H1 (cell line): ENCODE measurements at regions of chr12 and their contacts with region 1.

Region 1: GRCh38 chr12:39103552-39104165 is 198.3 kb upstream of the CPNE8 start:
- DNase-seq: no peak
- H3K4me3 ChIP-seq: no peak overlapping the region
- H3K27ac ChIP-seq: no peak overlapping the region
- H3K4me1 ChIP-seq: no peaks in the 10 kb centered on the region; a peak in 1 of 7 replicates
- H3K27me3 ChIP-seq: no peaks in the 10 kb centered on the region
- CTCF ChIP-seq: peak in 2 of 3 experiments; percentile 74 to 79; a peak in 3 of 4 replicates
- EP300 ChIP-seq: no peak
- POLR2A ChIP-seq: no peak
- RAD21 ChIP-seq: peak; percentile 93 to 95

Region 2: GRCh38 chr12:38906482-38907170 is 197.0 kb before region 1 on chr12:
- CTCF ChIA-PET with region 1: interaction called, 17 read pairs
- POLR2A ChIA-PET with region 1: no interaction called
- DNase-seq: peak; percentile 65 to 93
- H3K4me3 ChIP-seq: peak overlapping the region; percentile 63 to 75 (median 72)
- H3K27ac ChIP-seq: no peak overlapping the region
- H3K4me1 ChIP-seq: peaks cover 0 to 2% (median 0%) of the 10 kb centered on the region in 4 experiments; a peak in 1 of 7 replicates
- H3K27me3 ChIP-seq: peaks cover 0 to 10% (median 4%) of the 10 kb centered on the region in 4 experiments; a peak in 4 of 7 replicates
- CTCF ChIP-seq: peak; percentile 85 to 89 (median 86)
- EP300 ChIP-seq: peak in 1 of 2 experiments; percentile 82; a peak in 1 of 3 replicates
- POLR2A ChIP-seq: no peak; a peak in 1 of 3 replicates
- RAD21 ChIP-seq: peak; percentile 70 to 84

Region 3: DNA sequence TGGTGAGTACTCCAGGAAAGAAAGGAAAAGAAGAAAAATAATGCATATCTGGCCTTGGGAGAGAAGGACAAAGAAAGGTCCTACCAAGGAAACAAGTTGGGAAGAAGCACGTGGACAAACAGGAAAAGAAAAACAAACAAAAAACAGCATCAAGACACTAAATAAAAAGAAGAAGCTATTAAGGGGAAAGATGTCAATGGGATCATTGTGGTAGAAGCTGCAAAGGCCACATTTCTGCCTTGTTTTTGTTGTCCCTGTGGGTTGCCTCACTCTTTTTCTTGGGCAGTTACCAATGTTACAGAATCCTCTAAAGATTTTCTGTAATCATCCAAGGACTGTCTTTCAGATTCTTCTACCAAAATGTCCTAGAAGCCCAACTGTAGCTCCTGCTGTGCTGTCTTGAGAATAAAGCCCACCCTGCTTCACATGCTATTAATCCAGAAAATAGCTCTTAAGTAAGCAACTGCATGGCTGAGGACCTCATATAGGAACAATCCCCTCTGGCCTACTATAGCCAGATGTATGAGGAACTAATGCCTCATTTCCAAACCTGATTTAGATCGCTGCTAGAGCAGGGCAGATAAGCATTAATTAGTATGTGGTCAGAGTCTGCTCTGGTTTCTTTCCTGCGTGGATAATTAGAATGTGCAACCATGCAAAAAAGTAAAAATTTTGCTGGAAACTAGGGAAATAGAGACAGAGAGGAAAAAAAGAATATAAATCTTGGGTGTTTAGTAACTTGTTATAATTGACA is 188.1 kb before region 1 on chr12:
- CTCF ChIA-PET with region 1: interaction called, 26 read pairs
- POLR2A ChIA-PET with region 1: no interaction called
- DNase-seq: no peak
- H3K4me3 ChIP-seq: no peak overlapping the region
- H3K27ac ChIP-seq: no peak overlapping the region
- H3K4me1 ChIP-seq: no peaks in the 10 kb centered on the region
- H3K27me3 ChIP-seq: no peaks in the 10 kb centered on the region
- CTCF ChIP-seq: no peak
- EP300 ChIP-seq: no peak
- POLR2A ChIP-seq: no peak
- RAD21 ChIP-seq: no peak

Region 4: GRCh38 chr12:38921025-38921677 is 182.5 kb before region 1 on chr12:
- CTCF ChIA-PET with region 1: interaction called, 26 read pairs
- POLR2A ChIA-PET with region 1: no interaction called
- DNase-seq: no peak
- H3K4me3 ChIP-seq: no peak overlapping the region
- H3K27ac ChIP-seq: no peak overlapping the region
- H3K4me1 ChIP-seq: no peaks in the 10 kb centered on the region
- H3K27me3 ChIP-seq: no peaks in the 10 kb centered on the region
- CTCF ChIP-seq: peak in 2 of 3 experiments; percentile 63 to 72; a peak in 3 of 4 replicates
- EP300 ChIP-seq: no peak
- POLR2A ChIP-seq: no peak
- RAD21 ChIP-seq: peak; percentile 75 to 86

Region 5: DNA sequence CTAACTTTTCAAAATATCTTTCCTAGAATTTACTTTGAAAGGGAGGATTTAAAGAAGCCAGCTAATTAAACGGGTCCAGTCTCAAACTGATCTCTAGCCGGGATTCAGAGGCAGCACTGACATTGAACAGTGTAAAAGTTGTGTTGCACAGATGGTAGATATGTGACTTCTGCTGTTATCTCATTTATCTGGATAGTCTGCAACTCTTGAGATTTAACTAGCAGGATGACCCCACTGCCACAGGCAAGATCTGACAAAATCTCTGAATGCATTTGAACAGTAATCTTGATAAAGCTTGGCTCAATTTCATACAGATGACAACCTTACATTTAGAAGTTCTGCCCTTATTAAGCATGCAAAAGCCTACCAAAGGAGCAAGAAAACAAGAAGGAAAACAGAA is 60.2 kb before region 1 on chr12:
- CTCF ChIA-PET with region 1: interaction called, 18 read pairs
- POLR2A ChIA-PET with region 1: no interaction called
- DNase-seq: no peak
- H3K4me3 ChIP-seq: no peak overlapping the region
- H3K27ac ChIP-seq: no peak overlapping the region
- H3K4me1 ChIP-seq: no peaks in the 10 kb centered on the region
- H3K27me3 ChIP-seq: no peaks in the 10 kb centered on the region
- CTCF ChIP-seq: no peak
- EP300 ChIP-seq: no peak
- POLR2A ChIP-seq: no peak
- RAD21 ChIP-seq: no peak